ENCODE measurements at regions of chr22 and their contacts with region 1.

Region 1: GRCh38 chr22:29040385-29041275 is 21.0 kb downstream of the C22orf31 start:
- DNase-seq: peak in 6 of 10 donors; percentile 63 to 80 (median 72)
- H3K4me3 ChIP-seq: peak overlapping the region in 3 of 59 donors; percentile 10 to 19 (median 15)
- H3K27ac ChIP-seq: peak overlapping the region in 50 of 59 donors; percentile 1 to 87 (median 60)
- H3K27me3 ChIP-seq: no peaks in the 10 kb centered on the region
- CTCF ChIP-seq: peak in 55 of 56 donors; percentile 95 to 99 (median 98)

Region 2: GRCh38 chr22:28600546-28601143 is 440.0 kb before region 1 on chr22:
- intact Hi-C with region 1: loop called in 1 of 2 experiments (anchors 5 kb)
- DNase-seq: no peak
- H3K4me3 ChIP-seq: no peak overlapping the region
- H3K27ac ChIP-seq: no peak overlapping the region
- H3K27me3 ChIP-seq: no peaks in the 10 kb centered on the region
- CTCF ChIP-seq: peak; percentile 59 to 96 (median 74)

Region 3: DNA sequence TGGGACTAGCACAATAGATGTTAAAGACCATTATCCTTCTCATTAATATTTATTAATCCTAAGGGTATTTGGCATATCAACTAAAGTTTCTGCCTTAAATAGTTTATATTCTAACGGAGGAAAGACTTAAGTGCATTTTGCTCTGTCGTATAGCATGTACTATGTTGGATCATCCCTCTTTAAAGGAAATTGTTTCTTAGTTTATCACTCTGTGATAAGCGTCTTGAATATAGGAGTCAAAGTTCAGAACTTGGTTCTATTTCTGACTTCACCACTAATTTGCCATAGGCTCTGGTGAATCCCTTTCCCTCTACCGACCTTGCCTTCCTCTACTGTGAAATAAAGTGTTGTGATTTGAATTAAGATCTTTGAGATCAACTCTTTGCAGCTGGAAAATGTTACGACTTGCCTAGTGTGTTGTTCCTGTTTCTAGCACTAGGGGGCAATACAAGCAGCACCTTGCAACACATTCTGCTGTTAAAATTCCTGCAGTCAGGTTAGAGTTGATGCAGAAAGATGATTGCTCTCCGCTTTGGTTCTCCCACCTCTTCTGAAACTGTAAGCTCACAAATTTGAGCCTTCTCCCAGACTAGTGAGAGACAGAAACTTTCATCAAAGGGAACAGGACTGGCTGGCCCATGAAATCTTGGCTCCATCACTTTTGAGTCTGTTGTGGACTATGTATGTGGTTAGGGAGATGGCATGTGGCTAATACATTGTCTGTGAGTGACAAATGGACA is 185.1 kb before region 1 on chr22:
- intact Hi-C with region 1: loop called (anchors 1 to 2 kb)
- DNase-seq: peak in 4 of 10 donors; percentile 12 to 59 (median 45)
- H3K4me3 ChIP-seq: peak overlapping the region in 1 of 59 donors; percentile 1
- H3K27ac ChIP-seq: peak overlapping the region in 2 of 59 donors; percentile 14 to 29
- H3K27me3 ChIP-seq: no peaks in the 10 kb centered on the region
- CTCF ChIP-seq: peak; percentile 81 to 98 (median 93)